T-cell (primary cell): ENCODE measurements at regions of chr21 and their contacts with region 1.

Region 1: GRCh38 chr21:41425954-41426675 is at the start of gene MX1:
- DNase-seq: peak; percentile 74 to 91 (median 88)
- ATAC-seq: peak; percentile 97 to 99 (median 98)
- H3K4me3 ChIP-seq: peak within 1 kb of the TSS; percentile 61 to 96
- H3K4me3 Mint-ChIP-seq: peak within 1 kb of the TSS; percentile 94 to 96 (median 94)
- H3K27ac ChIP-seq: peak within 1 kb of the TSS; percentile 66
- H3K27ac Mint-ChIP-seq: peak within 1 kb of the TSS; percentile 97 to 98
- H3K4me1 ChIP-seq: peaks cover 5 to 28% of the 10 kb centered on the region in 2 experiments
- H3K4me1 Mint-ChIP-seq: peaks cover 50 to 79% (median 68%) of the 10 kb centered on the region in 3 donors
- H3K27me3 ChIP-seq: no peaks in the 10 kb centered on the region
- H3K27me3 Mint-ChIP-seq: no peaks in the 10 kb centered on the region
- total RNA-seq, gene MX1: 55.2 to 82.5 (median 68.7) TPM

Region 2: GRCh38 chr21:41361786-41362604 is 64.1 kb before region 1 on chr21 and contains the start of gene MX2:
- CTCF ChIA-PET with region 1: interaction called in 1 of 2 experiments, 5 read pairs
- POLR2A ChIA-PET with region 1: interaction called in 1 of 2 experiments, 10 read pairs
- DNase-seq: peak; percentile 69 to 95 (median 87)
- ATAC-seq: peak; percentile 83 to 85 (median 84)
- H3K4me3 ChIP-seq: peak within 1 kb of the TSS; percentile 75 to 82
- H3K4me3 Mint-ChIP-seq: peak within 1 kb of the TSS; percentile 93 to 94 (median 94)
- H3K27ac ChIP-seq: peak within 1 kb of the TSS; percentile 99
- H3K27ac Mint-ChIP-seq: peak within 1 kb of the TSS; percentile 98 to 100
- H3K4me1 ChIP-seq: peaks cover 17 to 35% of the 10 kb centered on the region in 2 experiments
- H3K4me1 Mint-ChIP-seq: peaks cover 57 to 64% (median 61%) of the 10 kb centered on the region in 3 donors
- H3K27me3 ChIP-seq: no peaks in the 10 kb centered on the region
- H3K27me3 Mint-ChIP-seq: no peaks in the 10 kb centered on the region
- total RNA-seq, gene MX2: 77.7 to 103 (median 81.8) TPM